ENCODE measurements at regions of chr6 and their contacts with region 1.

Region 1: GRCh38 chr6:11232193-11232769 is at the start of gene NEDD9:
- DNase-seq: peak; percentile 98
- ATAC-seq: peak; percentile 97
- H3K4me3 ChIP-seq: peak within 1 kb of the TSS; percentile 96 to 99
- H3K27ac ChIP-seq: peak within 1 kb of the TSS; percentile 97 to 100
- H3K4me1 ChIP-seq: peaks cover 2% of the 10 kb centered on the region in 2 donors
- H3K27me3 ChIP-seq: no peaks in the 10 kb centered on the region
- total RNA-seq, gene NEDD9: 49.8 to 252 TPM

Region 2: GRCh38 chr6:11172501-11173332 is 59.6 kb before region 1 on chr6:
- intact Hi-C with region 1: loop called in 1 of 2 experiments (anchors 10 kb)
- DNase-seq: peak; percentile 77 to 90
- ATAC-seq: peak; percentile 77
- H3K4me3 ChIP-seq: no peak overlapping the region
- H3K27ac ChIP-seq: no peak overlapping the region
- H3K4me1 ChIP-seq: peaks cover 0 to 3% of the 10 kb centered on the region in 2 donors
- H3K27me3 ChIP-seq: no peaks in the 10 kb centered on the region

Region 3: GRCh38 chr6:11194356-11195218 is 37.7 kb before region 1 on chr6:
- intact Hi-C with region 1: loop called in 1 of 2 experiments (anchors 5 kb)
- DNase-seq: no peak
- ATAC-seq: no peak
- H3K4me3 ChIP-seq: no peak overlapping the region
- H3K27ac ChIP-seq: peak overlapping the region; percentile 65 to 77
- H3K4me1 ChIP-seq: peaks cover 10% of the 10 kb centered on the region in 2 donors
- H3K27me3 ChIP-seq: no peaks in the 10 kb centered on the region

Region 4: GRCh38 chr6:11251541-11252360 is 19.5 kb after region 1 on chr6:
- intact Hi-C with region 1: loop called in 1 of 2 experiments (anchors 2 kb)
- DNase-seq: peak; percentile 76 to 80
- ATAC-seq: peak; percentile 89
- H3K4me3 ChIP-seq: no peak overlapping the region
- H3K27ac ChIP-seq: peak overlapping the region; percentile 18 to 97
- H3K4me1 ChIP-seq: peaks cover 4 to 7% of the 10 kb centered on the region in 2 donors
- H3K27me3 ChIP-seq: no peaks in the 10 kb centered on the region

Region 5: DNA sequence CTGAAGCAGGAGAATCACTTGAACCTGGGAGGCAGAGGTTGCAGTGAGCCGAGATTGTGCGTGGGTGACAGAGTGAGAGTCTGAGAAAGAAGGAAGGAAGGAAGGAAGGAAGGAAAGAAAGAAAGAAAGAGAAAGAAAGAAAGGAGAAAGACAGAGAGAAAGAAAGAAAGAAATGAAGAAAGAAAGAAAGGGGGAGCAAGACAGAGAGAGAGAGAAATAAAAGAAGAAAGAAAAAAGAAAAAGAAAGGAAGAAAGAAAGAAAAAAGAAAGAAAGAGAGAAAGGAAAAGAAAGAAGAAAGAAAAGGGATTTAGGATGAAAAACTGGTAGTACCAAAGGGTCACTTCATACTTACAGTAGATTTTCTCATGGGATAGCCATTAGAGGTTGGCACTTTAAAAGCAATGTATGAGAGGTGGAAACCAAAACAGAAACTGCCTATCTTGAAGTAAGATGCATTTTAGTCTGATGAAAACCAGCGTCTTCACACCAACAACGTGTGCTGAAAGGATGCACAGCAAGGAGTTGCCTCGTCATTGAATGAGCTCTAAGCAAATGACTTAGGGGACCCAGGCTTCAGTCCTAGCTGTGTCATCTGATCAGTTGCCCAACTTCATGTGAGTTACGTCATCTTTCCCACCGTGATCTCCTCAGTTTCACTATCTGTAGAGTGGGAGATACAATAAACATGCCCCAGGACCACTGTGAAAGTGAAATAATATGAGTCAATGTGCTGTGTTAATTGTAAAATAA is 134.1 kb after region 1 on chr6:
- intact Hi-C with region 1: loop called in 1 of 2 experiments (anchors 5 kb)
- DNase-seq: no peak
- ATAC-seq: no peak
- H3K4me3 ChIP-seq: no peak overlapping the region
- H3K27ac ChIP-seq: peak overlapping the region in 1 of 2 donors; percentile 45
- H3K4me1 ChIP-seq: peaks cover 0 to 2% of the 10 kb centered on the region in 2 donors
- H3K27me3 ChIP-seq: no peaks in the 10 kb centered on the region

Region 6: GRCh38 chr6:11414176-11414963 is 182.1 kb after region 1 on chr6:
- intact Hi-C with region 1: loop called in 1 of 2 experiments (anchors 5 kb)
- DNase-seq: no peak
- ATAC-seq: no peak
- H3K4me3 ChIP-seq: no peak overlapping the region
- H3K27ac ChIP-seq: peak overlapping the region; percentile 12 to 63
- H3K4me1 ChIP-seq: peaks cover 3 to 4% of the 10 kb centered on the region in 2 donors
- H3K27me3 ChIP-seq: no peaks in the 10 kb centered on the region

Measured in aorta (tissue), 5 donors.